ENCODE measurements at regions of chr12 and their contacts with region 1.

Region 1: DNA sequence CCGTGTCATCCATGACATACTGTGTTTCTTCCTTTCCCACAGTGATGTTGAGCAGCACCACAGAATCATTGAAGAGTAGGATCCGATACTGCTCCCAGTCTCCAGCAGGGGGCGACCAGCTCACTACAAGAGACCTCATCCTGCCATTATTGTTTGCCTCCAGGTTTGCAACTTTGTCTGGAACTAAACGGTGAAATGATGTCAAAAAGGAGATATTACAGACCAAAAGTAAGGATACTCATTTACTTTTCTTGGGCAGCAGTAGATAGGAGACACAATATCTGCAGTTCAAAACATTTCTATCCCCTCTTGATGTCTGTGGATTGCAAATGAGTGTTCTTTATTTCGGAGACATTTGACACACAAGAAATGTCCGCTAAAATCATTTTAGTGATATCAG is 47.2 kb downstream of the PTPRB start:
- DNase-seq: peak; percentile 36 to 63 (median 44)
- H3K4me3 ChIP-seq: no peak overlapping the region
- H3K27ac ChIP-seq: no peak overlapping the region
- H3K4me1 ChIP-seq: no peaks in the 10 kb centered on the region
- H3K27me3 ChIP-seq: no peaks in the 10 kb centered on the region
- CTCF ChIP-seq: peak in 2 of 3 donors; percentile 34 to 54
- EP300 ChIP-seq: no peak
- POLR2A ChIP-seq: no peak

Region 2: GRCh38 chr12:70393787-70394499 is 196.1 kb before region 1 on chr12:
- intact Hi-C with region 1: no loop called
- DNase-seq: no peak
- H3K4me3 ChIP-seq: no peak overlapping the region
- H3K27ac ChIP-seq: no peak overlapping the region
- H3K4me1 ChIP-seq: no peaks in the 10 kb centered on the region
- H3K27me3 ChIP-seq: no peaks in the 10 kb centered on the region
- CTCF ChIP-seq: no peak
- EP300 ChIP-seq: no peak
- POLR2A ChIP-seq: no peak

Region 3: DNA sequence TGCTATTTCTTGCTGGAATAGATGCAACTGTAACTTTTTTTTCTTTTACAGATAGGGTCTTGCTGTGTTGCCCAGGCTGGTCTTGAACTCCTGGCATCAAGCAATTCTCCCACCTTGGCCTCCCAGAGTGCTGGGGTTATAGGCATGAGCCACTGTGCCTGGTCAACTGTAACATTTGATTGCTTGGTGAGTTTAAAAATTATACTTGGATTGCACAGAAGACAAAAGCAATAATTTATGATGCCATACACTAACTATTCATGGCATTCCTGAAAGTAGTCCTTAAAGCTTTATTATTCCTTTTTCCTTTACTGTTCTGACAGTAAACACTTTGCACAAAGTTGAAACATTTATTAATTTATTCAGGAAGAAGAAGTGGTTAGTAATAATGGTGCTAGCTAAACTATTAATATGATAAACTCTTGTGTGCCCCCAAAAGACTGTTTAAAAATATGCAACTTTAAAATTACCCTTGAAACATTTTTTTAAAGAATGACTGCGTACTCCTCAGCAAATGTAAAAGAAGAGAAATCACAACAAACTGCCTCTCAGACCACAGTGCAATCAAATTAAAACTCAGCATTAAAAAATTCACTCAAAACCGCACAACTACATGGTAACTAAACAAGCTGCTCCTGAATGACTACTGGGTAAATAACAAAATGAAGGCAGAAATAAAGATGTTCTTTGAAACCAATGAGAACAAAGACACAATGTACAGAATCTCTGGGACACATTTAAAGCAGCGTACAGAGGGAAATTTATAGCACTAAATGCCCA is 38.8 kb after region 1 on chr12:
- intact Hi-C with region 1: no loop called
- DNase-seq: no peak
- H3K4me3 ChIP-seq: no peak overlapping the region
- H3K27ac ChIP-seq: no peak overlapping the region
- H3K4me1 ChIP-seq: no peaks in the 10 kb centered on the region
- H3K27me3 ChIP-seq: no peaks in the 10 kb centered on the region
- CTCF ChIP-seq: no peak
- EP300 ChIP-seq: no peak
- POLR2A ChIP-seq: no peak

Region 4: DNA sequence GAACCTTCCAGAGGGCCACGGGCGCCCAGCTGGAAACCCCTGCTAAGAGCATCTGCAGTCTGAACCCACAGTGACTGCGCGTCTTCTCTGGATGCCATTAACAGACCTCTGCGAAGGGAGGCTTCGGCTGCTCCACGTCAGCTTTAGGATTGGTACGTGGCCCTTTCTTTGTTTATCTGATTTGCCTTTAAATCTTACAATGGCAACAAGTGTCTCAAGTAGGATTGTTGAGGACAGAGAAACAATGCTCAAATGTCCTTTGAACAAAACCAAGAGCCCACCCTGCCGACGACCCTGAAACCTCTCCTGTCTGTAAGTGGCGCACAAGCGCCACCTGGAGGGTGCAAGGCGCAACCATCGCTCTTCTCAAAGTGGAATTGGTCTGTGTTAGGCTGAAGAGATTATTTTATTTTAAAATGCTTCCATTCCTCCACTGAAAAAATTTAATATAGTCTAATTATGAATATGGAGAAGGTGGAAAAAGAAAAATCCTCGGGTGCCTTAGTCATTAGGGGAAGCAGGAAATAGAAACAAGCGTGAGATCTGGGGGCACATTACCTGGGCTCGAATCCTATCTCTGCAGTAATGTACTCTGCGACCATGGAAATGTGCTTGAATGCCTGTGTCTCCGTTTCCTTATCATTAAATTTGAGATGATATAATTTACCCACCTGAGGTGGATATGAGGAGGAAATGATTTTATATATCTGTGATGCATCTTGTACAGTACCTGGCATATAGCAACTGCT is 129.8 kb after region 1 on chr12:
- intact Hi-C with region 1: loop called in 1 of 4 experiments (anchors 10 kb)
- DNase-seq: peak in 1 of 5 donors; percentile 20
- H3K4me3 ChIP-seq: no peak overlapping the region
- H3K27ac ChIP-seq: no peak overlapping the region
- H3K4me1 ChIP-seq: no peaks in the 10 kb centered on the region
- H3K27me3 ChIP-seq: no peaks in the 10 kb centered on the region
- CTCF ChIP-seq: peak in 2 of 3 donors; percentile 30 to 45
- EP300 ChIP-seq: no peak
- POLR2A ChIP-seq: no peak

Region 5: GRCh38 chr12:70812151-70812550 is 222.1 kb after region 1 on chr12:
- intact Hi-C with region 1: no loop called
- DNase-seq: no peak
- H3K4me3 ChIP-seq: no peak overlapping the region
- H3K27ac ChIP-seq: no peak overlapping the region
- H3K4me1 ChIP-seq: no peaks in the 10 kb centered on the region
- H3K27me3 ChIP-seq: no peaks in the 10 kb centered on the region
- CTCF ChIP-seq: no peak
- EP300 ChIP-seq: no peak
- POLR2A ChIP-seq: no peak